ENCODE measurements at regions of chrX and their contacts with region 1.

Region 1: GRCh38 chrX:12974796-12975669 is at the start of gene TMSB4X:
- DNase-seq: no peak
- H3K4me3 ChIP-seq: peak within 1 kb of the TSS; percentile 79
- CTCF ChIP-seq: no peak

Region 2: GRCh38 chrX:12936947-12937346 is 38.1 kb before region 1 on chrX:
- CTCF ChIA-PET with region 1: no interaction called
- POLR2A ChIA-PET with region 1: no interaction called
- DNase-seq: no peak
- H3K4me3 ChIP-seq: no peak overlapping the region
- CTCF ChIP-seq: no peak

Region 3: DNA sequence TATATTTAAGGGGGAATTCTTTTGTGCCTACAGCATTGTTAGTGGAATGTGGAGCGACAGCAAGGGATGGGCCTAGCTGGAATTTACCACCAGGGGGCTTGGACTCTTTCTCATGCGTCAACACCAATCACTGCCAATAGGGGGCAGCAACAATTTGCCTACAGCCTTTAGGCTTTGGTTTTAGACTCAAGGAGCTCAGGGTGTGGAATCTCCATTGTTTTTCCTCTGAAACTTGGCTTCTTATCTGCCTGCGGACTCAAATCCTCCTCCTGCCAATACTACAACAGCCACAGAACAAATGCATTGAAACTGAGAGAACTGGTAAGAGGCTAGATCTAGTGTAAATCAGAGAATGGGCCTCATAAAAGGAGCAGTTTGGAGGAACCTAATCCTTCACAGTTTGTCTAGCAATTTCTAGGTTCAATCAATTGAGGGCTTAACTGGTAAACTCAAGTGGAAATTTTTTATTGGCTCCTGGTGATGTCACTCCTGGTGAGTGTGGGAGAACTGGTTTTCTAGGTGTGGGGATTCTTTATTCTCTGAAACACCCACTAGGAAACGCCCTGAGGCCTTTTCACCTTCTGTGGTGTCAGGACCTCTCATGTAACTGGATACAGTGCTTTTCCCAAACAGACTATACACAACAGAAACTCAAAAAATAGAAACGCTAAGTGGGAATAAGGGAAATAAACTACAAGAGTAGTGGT is 28.0 kb before region 1 on chrX:
- CTCF ChIA-PET with region 1: interaction called, 11 read pairs
- POLR2A ChIA-PET with region 1: interaction called, 21 read pairs
- DNase-seq: peak; percentile 47
- H3K4me3 ChIP-seq: no peak overlapping the region
- CTCF ChIP-seq: peak; percentile 89

Region 4: GRCh38 chrX:12955882-12956703 is 18.9 kb before region 1 on chrX:
- CTCF ChIA-PET with region 1: interaction called, 5 read pairs
- POLR2A ChIA-PET with region 1: interaction called, 16 read pairs
- DNase-seq: peak; percentile 40
- H3K4me3 ChIP-seq: no peak overlapping the region
- CTCF ChIP-seq: no peak

Region 5: GRCh38 chrX:13287816-13288215 is 312.8 kb after region 1 on chrX:
- CTCF ChIA-PET with region 1: no interaction called
- POLR2A ChIA-PET with region 1: interaction called, 12 read pairs
- DNase-seq: no peak
- H3K4me3 ChIP-seq: no peak overlapping the region
- CTCF ChIP-seq: no peak

Region 6: DNA sequence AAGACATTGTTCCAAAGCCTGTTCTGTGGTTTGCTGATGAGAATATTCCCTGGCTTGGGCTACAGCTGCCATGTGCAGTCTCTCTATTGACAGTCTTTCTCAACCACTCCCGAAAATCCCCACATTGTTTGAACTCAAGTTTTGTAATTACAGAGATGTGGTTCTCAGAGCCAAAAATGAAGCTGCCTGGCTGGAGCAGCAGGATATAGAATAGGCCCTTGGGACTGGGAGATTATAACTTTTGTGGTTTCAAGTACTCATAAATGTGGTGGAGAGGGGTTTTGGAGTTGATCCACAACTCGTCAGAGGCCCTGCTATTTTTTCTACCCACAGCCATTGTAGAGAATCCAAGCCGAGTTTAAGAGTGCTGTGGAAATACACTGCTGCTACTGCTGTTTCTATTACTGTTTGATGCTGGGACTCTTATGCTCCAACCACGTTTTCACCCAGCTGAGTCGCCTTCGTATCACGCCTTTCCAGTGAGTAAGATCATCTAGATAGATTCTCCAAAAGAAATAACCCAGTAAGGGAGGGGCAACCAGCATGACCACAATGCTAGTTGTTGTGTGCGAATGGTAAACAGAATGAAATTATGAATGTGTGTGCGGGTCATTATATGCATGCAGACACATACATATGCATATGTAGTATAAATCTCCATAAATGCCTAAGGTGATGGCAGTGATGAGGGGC is 402.0 kb after region 1 on chrX:
- CTCF ChIA-PET with region 1: no interaction called
- POLR2A ChIA-PET with region 1: interaction called, 17 read pairs
- DNase-seq: peak; percentile 93
- H3K4me3 ChIP-seq: peak overlapping the region; percentile 15
- CTCF ChIP-seq: no peak

Region 7: DNA sequence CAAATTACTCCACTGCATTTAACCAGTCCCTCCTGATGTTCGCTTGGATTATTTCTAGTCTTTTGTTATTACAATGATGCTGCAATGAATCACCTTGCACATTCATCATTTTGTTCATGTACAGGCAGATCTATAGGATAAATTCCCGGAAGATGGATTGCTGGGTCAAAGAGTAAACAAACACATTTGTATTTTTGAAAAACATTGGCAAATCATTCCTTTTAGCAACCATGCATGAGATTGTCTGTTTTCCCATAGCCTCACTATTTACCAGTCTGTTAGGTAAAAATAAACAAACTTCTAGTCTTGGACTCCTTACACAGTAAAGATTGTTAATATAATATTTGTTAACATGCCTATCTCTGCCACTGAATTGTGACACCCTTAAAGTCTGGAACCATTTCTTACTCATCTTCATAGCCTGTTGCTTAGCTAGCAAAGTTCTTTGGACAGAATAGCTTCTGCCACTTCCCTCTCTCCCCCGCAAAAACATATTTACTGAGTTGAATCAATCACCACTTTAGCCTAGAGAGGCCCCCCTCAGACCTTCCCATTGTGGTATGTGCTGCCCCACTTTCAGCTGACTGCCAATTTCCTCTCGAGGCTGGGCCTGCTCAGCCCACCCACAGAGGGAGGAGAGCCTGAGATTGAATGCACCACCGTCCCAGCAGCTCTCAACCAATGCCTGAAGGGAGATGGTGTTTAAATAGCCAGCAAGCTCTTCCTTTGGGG is 453.2 kb after region 1 on chrX:
- CTCF ChIA-PET with region 1: no interaction called
- POLR2A ChIA-PET with region 1: interaction called, 13 read pairs
- DNase-seq: peak; percentile 61
- H3K4me3 ChIP-seq: no peak overlapping the region
- CTCF ChIP-seq: no peak

Region 8: DNA sequence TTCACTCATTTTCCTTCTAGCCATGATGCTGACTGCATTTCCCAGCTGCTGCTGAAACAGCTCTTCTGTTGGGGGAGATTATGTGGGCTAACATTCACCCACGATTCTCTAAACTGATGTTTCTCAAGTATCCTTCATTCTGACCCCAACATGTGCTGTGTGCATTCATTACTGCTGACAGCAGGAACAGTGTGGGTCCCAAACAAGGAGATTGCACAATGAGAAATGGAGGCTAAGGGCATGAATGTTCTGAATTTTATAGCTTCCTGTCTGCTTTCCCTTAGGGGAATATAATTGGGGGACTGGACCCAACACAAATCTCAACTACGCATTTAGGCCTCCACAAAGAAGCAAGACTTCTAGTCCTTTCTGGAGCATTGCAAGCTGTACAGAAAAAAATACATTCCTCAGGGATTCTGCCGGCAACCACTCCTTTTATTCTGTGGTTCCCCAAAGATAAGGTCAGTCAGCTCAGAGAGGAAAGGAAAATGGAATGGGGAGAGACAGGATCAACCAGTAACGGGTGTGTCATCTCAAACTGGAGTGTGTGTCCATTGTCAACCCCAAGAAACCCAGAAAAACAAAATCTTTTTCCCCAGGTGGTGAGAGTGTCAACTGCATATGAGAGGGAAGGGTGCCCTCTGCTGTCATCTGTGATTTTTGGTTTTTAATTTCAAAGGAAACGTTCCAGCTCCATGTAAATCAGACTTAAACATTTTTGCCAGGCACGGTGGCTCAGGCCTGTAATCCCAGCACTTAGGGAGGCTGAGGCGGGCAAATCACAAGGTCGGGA is 512.9 kb after region 1 on chrX:
- CTCF ChIA-PET with region 1: interaction called, 7 read pairs
- POLR2A ChIA-PET with region 1: interaction called, 45 read pairs
- DNase-seq: peak; percentile 80
- H3K4me3 ChIP-seq: no peak overlapping the region
- CTCF ChIP-seq: peak; percentile 26

Measured in AG04449 (cell line).